Ovary (tissue), 10 donors: ENCODE measurements at regions of chr12 and their contacts with region 1.

Region 1: DNA sequence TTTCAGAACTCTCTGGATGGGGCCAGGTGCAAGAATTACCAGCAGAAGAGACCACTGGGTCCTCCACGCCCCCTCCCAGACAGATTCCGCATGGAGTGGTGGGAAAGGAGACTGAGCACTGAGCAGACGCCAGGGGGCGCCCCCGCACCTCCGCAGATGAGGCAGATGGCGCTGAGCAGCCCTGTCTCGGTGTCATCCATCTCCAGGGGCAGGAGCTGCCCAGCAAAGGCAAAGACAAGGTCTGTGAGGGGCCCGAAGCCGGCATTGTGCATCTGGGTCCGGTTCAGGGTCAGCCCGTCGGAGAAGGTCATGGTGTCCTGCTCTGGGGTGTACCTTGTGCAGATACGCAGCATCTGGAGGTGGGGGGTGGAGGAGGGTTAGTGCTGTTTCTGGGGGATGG is 6.3 kb upstream of the ITGB7 start:
- DNase-seq: peak; percentile 74 to 89 (median 85)
- H3K4me3 ChIP-seq: no peak overlapping the region
- H3K27ac ChIP-seq: no peak overlapping the region
- H3K4me1 ChIP-seq: peaks cover 24% of the 10 kb centered on the region
- H3K27me3 ChIP-seq: no peaks in the 10 kb centered on the region
- CTCF ChIP-seq: peak; percentile 89 to 93 (median 91)
- EP300 ChIP-seq: no peak
- POLR2A ChIP-seq: no peak

Region 2: DNA sequence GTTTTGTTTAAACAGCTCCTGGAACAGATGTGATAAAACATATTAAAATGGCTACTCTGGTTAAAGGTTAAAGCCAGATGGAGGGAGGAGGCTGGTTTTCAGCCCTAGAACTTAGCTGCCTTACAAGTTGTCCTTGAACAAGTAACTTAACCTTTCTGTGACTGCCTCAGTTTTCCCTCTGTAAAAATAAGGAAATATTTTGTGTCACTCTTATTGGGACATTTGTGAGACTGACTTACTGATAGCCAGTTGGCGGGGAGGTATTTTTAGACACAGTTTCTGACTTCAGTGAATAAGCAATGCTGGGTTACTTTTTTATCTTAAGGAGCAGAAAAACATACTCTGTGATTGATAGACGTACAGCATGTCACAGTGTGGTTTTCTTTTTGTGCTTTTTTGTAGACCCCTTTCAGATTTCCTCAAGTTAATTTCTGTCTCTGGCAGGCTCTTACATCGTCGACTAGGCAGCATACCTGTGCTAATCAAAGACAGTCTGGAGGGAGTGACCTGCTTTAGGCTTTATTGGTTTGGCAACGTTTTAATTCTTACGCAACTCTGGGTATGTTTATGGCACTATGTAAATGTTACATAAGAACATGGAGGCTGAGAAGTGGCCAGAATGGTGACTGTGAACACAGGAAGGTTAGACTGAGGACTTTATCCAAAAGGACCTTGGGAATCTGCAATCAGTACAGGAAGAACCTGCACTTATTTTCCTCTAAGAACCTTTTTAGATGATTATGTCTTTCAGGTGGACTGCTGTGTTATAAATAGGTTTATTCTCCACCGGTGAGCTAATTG is 1258.6 kb before region 1 on chr12:
- intact Hi-C with region 1: no loop called
- DNase-seq: no peak
- H3K4me3 ChIP-seq: no peak overlapping the region
- H3K27ac ChIP-seq: peak overlapping the region in 1 of 2 donors; percentile 6
- H3K4me1 ChIP-seq: peaks cover 7% of the 10 kb centered on the region
- H3K27me3 ChIP-seq: no peaks in the 10 kb centered on the region
- CTCF ChIP-seq: no peak
- EP300 ChIP-seq: no peak
- POLR2A ChIP-seq: no peak

Region 3: DNA sequence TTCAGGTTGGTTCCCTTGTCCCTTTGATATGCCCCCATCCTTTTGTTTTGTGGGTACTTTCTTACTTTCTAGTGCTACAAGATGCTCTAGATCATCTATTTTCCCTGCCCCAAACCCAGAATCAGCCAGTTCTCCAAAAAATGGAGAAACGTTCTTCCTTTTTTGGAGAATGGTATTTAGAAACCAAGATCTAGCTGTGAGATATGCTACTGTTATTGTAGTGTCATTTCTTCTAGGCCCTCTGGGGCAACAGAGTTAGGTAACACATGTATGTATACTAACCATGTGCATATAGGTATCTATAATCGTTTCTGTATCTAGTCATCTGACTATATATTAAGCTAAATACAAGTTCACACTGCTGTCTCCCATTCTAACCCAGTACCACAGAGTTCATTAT is 122.8 kb before region 1 on chr12:
- intact Hi-C with region 1: no loop called
- DNase-seq: no peak
- H3K4me3 ChIP-seq: no peak overlapping the region
- H3K27ac ChIP-seq: no peak overlapping the region
- H3K4me1 ChIP-seq: peaks cover 2% of the 10 kb centered on the region
- H3K27me3 ChIP-seq: no peaks in the 10 kb centered on the region
- CTCF ChIP-seq: no peak
- EP300 ChIP-seq: no peak
- POLR2A ChIP-seq: no peak

Region 4: GRCh38 chr12:53129170-53129569 is 84.2 kb before region 1 on chr12:
- intact Hi-C with region 1: no loop called
- DNase-seq: no peak
- H3K4me3 ChIP-seq: no peak overlapping the region
- H3K27ac ChIP-seq: no peak overlapping the region
- H3K4me1 ChIP-seq: no peaks in the 10 kb centered on the region
- H3K27me3 ChIP-seq: no peaks in the 10 kb centered on the region
- CTCF ChIP-seq: no peak
- EP300 ChIP-seq: no peak
- POLR2A ChIP-seq: no peak

Region 5: GRCh38 chr12:53251477-53252348 is 38.4 kb after region 1 on chr12:
- intact Hi-C with region 1: loop called in 2 of 4 experiments (anchors 5 kb)
- DNase-seq: peak; percentile 73 to 87 (median 83)
- H3K4me3 ChIP-seq: peak overlapping the region; percentile 76
- H3K27ac ChIP-seq: peak overlapping the region; percentile 60 to 74
- H3K4me1 ChIP-seq: peaks cover 3% of the 10 kb centered on the region
- H3K27me3 ChIP-seq: no peaks in the 10 kb centered on the region
- CTCF ChIP-seq: peak in 2 of 3 donors; percentile 20 to 38
- EP300 ChIP-seq: no peak
- POLR2A ChIP-seq: peak; percentile 24

Region 6: GRCh38 chr12:53287741-53288216 is 74.4 kb after region 1 on chr12:
- intact Hi-C with region 1: loop called in 3 of 4 experiments (anchors 2 to 5 kb)
- DNase-seq: peak; percentile 60 to 79 (median 67)
- H3K4me3 ChIP-seq: no peak overlapping the region
- H3K27ac ChIP-seq: no peak overlapping the region
- H3K4me1 ChIP-seq: no peaks in the 10 kb centered on the region
- H3K27me3 ChIP-seq: no peaks in the 10 kb centered on the region
- CTCF ChIP-seq: peak; percentile 8 to 58 (median 48)
- EP300 ChIP-seq: no peak
- POLR2A ChIP-seq: no peak